T-cell (primary cell): ENCODE measurements at regions of chr22 and their contacts with region 1.

Region 1: GRCh38 chr22:31561238-31561887 is 65.0 kb downstream of the SFI1 start:
- DNase-seq: peak in 33 of 35 experiments; percentile 2 to 56 (median 22)
- ATAC-seq: peak; percentile 37 to 78 (median 69)
- H3K4me3 ChIP-seq: no peak overlapping the region
- H3K4me3 Mint-ChIP-seq: no peak overlapping the region
- H3K27ac ChIP-seq: no peak overlapping the region
- H3K27ac Mint-ChIP-seq: peak overlapping the region; percentile 31 to 34
- H3K4me1 ChIP-seq: no peaks in the 10 kb centered on the region
- H3K4me1 Mint-ChIP-seq: peaks cover 0 to 4% (median 2%) of the 10 kb centered on the region in 3 donors
- H3K27me3 ChIP-seq: no peaks in the 10 kb centered on the region
- H3K27me3 Mint-ChIP-seq: no peaks in the 10 kb centered on the region

Region 2: GRCh38 chr22:31465307-31465706 is 96.1 kb before region 1 on chr22:
- CTCF ChIA-PET with region 1: no interaction called
- POLR2A ChIA-PET with region 1: no interaction called
- DNase-seq: no peak
- ATAC-seq: no peak
- H3K4me3 ChIP-seq: no peak overlapping the region
- H3K4me3 Mint-ChIP-seq: no peak overlapping the region
- H3K27ac ChIP-seq: no peak overlapping the region
- H3K27ac Mint-ChIP-seq: no peak overlapping the region
- H3K4me1 ChIP-seq: no peaks in the 10 kb centered on the region
- H3K4me1 Mint-ChIP-seq: peaks cover 0 to 5% (median 0%) of the 10 kb centered on the region in 3 donors
- H3K27me3 ChIP-seq: no peaks in the 10 kb centered on the region
- H3K27me3 Mint-ChIP-seq: no peaks in the 10 kb centered on the region

Region 3: DNA sequence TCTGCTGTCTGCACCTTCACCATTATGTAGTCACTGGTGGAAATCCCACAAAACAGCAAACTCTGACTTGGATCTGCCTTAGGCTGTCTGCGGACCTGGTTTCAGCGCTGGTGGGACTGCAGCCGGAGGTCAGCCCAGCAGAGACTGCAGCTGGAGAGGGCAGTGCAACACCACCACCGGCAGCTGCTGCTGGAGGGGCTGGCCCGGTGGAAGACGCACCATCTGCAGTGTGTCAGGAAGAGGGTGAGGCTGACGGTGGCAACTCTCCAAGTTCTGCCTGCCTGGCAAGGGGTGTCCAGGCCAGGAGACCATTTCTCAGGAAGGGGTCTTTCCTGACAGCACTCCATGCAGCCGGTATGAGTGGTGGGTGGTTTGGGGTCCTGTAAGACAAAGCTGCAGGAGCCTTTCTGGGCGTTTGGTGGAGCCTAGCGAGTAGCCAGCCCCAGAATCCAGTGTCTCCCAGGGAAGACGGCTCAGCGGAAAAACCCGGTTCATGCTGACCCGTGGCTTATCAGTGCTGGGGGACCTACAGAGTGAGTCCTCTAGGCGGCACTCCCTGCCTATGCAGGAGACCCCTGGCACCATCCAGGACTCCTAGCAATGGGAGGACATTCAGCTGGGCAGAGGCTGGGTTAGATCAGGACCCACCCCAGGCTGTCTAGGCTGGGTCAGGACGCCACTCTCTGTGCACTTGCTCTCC is 49.8 kb after region 1 on chr22:
- CTCF ChIA-PET with region 1: no interaction called
- POLR2A ChIA-PET with region 1: interaction called in 1 of 2 experiments, 11 read pairs
- DNase-seq: no peak
- ATAC-seq: no peak
- H3K4me3 ChIP-seq: no peak overlapping the region
- H3K4me3 Mint-ChIP-seq: no peak overlapping the region
- H3K27ac ChIP-seq: no peak overlapping the region
- H3K27ac Mint-ChIP-seq: no peak overlapping the region
- H3K4me1 ChIP-seq: peaks cover 0 to 17% of the 10 kb centered on the region in 2 experiments
- H3K4me1 Mint-ChIP-seq: peaks cover 12 to 20% (median 18%) of the 10 kb centered on the region in 3 donors
- H3K27me3 ChIP-seq: no peaks in the 10 kb centered on the region
- H3K27me3 Mint-ChIP-seq: no peaks in the 10 kb centered on the region

Region 4: DNA sequence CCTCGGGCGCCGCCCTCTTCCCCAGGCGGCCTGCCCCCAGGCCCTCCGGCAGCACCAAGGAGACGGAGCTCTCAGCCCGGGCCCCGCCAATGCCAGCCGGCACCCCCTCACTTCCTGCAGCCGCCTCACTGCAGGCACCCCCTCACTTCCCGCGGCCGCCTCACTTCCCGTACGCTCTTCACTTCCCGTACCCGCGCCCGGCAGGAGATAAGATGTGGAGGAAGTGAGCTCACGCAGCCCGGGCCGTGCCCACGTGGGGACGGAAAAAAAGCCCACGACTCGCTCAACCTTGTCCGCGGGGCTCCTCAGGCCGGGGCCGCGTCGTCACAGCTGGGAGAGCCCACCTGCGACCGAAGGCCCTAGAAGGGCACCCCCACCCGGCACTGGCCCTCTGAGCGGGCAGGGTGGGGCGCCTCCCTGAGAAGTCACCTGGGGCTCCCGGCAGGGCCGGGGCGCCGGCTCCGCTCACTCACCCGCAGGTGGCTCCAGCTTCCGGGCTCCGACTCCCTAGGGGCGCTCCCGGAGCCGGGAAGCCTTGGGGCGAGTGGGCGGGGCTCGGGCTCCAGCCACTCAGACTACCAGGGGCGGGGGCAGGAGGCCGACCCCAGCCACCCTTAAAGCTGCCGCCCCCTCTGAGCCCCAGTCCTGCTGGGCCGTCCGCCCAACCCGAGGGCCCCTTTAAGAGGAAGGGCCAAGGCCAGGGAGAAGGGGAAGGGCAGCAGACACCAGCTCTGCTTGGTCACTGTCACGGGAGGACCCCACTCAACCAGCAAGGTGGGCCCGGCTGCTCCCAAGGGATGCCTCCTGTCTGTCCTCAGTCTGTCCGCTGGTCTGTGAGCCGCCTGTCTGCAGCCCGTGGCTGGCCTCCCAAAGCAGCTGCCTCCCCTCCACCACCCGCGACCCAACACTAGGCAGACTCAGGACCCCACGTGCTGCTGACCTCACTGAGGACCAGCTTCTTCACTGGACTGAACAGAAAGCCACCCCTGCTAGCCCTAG is 69.3 kb after region 1 on chr22:
- CTCF ChIA-PET with region 1: interaction called, 4 to 17 read pairs
- POLR2A ChIA-PET with region 1: interaction called in 1 of 2 experiments, 3 read pairs
- DNase-seq: peak; percentile 75 to 94 (median 88)
- ATAC-seq: peak; percentile 90 to 92 (median 91)
- H3K4me3 ChIP-seq: peak overlapping the region; percentile 74 to 84
- H3K4me3 Mint-ChIP-seq: peak overlapping the region; percentile 82 to 86 (median 84)
- H3K27ac ChIP-seq: peak overlapping the region; percentile 89
- H3K27ac Mint-ChIP-seq: peak overlapping the region; percentile 89 to 92
- H3K4me1 ChIP-seq: peaks cover 15 to 64% of the 10 kb centered on the region in 2 experiments
- H3K4me1 Mint-ChIP-seq: peaks cover 49 to 52% (median 51%) of the 10 kb centered on the region in 3 donors
- H3K27me3 ChIP-seq: no peaks in the 10 kb centered on the region
- H3K27me3 Mint-ChIP-seq: no peaks in the 10 kb centered on the region